Activated CD4-positive, alpha-beta T cell treated with anti-CD3 and anti-CD28 coated beads, Interleukin-2, amount 10 ng/mL, durations not matched to agents 24 days and 14 days (primary cell): ENCODE measurements at regions of chr6 and their contacts with region 1.

Region 1: GRCh38 chr6:149264629-149265028 is 52.9 kb upstream of the TAB2 start:
- DNase-seq: peak; percentile 86
- H3K4me3 Mint-ChIP-seq: peak overlapping the region; percentile 58
- H3K27ac Mint-ChIP-seq: peak overlapping the region; percentile 75
- H3K4me1 Mint-ChIP-seq: peaks cover 43% of the 10 kb centered on the region
- H3K27me3 Mint-ChIP-seq: no peaks in the 10 kb centered on the region

Region 2: DNA sequence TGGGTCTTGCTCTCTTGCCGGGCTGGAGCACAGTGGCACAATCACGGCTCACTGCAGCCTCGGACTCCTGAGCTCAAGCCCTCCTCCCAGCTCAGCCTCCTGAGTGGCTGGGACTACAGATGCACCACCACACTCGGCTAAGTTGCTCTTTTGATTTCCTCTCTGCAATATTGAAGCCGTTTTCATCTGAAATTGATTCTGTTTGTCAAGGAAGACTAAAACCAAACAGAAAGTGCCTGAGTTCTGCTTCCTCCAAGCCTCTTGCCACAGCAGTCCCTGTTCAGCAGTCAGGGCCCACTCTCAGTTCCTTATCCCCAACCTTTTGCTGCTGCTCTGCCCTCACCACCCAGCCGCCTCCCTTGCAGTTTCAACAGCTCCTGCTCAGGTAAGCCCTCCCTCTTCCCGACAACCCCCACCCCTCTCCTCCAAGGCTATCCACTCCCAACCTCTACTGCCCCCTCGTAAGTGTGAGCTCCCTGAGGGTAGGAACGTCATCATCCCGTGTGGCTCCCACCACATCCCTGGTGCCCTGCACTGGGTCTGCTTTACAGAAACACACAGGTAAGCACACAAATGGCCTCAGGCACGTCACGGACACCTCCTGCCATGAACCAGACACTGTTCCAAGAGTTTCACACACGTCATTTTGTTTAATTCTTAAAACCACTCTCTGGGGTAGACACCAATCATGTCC is 17.8 kb before region 1 on chr6:
- intact Hi-C with region 1: loop called (anchors 2 kb)
- DNase-seq: no peak
- H3K4me3 Mint-ChIP-seq: peak overlapping the region; percentile 50
- H3K27ac Mint-ChIP-seq: peak overlapping the region; percentile 75
- H3K4me1 Mint-ChIP-seq: peaks cover 38% of the 10 kb centered on the region
- H3K27me3 Mint-ChIP-seq: no peaks in the 10 kb centered on the region